ENCODE measurements at regions of chr14 and their contacts with region 1.

Region 1: DNA sequence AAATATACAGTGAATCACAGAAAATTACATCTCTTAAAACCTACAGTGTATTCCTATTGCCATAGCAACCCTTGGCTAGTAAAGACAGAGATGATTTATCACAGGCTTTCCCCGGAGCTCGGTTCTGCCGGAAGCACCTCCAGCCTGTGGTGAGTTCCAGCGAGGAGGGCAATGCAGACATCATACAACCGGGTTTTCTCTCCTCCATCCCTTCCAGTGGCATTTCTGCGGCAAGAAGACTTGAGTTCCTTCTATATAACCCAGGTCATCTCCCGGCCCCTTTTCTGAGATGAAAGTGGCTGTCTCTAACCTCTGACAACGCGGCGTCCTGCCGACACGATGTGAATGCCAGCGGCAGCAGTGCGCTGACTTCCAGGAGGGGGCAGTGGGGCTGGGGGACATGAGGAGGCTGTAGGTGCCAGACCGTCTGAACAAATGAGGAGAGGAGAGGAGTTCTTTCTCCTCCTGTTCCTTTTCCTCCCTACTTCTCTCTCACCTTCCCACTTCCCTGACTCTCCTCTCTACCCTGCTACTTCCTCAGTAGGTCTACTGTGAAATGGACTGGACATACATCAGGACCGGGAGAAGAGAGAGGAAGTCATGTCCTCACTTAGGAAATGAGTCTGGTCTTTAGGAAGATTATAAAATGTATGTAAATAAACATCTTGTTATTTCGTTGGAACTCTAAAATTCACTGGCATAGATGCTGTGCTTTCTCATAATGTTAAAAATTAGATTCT is 68.6 kb upstream of the MAX start:
- DNase-seq: peak; percentile 76
- H3K4me3 ChIP-seq: no peak overlapping the region
- H3K27ac ChIP-seq: no peak overlapping the region
- H3K4me1 ChIP-seq: peaks cover 6% of the 10 kb centered on the region
- H3K27me3 ChIP-seq: no peaks in the 10 kb centered on the region
- CTCF ChIP-seq: peak in 1 of 2 donors; percentile 16

Region 2: GRCh38 chr14:65229751-65230749 is 59.1 kb after region 1 on chr14:
- CTCF ChIA-PET with region 1: no interaction called
- dilution Hi-C with region 1: loop called (anchors 5 kb)
- in situ Hi-C with region 1: no loop called
- intact Hi-C with region 1: no loop called
- DNase-seq: peak; percentile 41
- H3K4me3 ChIP-seq: peak overlapping the region; percentile 22 to 37 (median 28)
- H3K27ac ChIP-seq: peak overlapping the region; percentile 45
- H3K4me1 ChIP-seq: peaks cover 31% of the 10 kb centered on the region
- H3K27me3 ChIP-seq: no peaks in the 10 kb centered on the region
- CTCF ChIP-seq: no peak

Region 3: GRCh38 chr14:65604936-65605335 is 434.0 kb after region 1 on chr14:
- CTCF ChIA-PET with region 1: no interaction called
- dilution Hi-C with region 1: no loop called
- in situ Hi-C with region 1: loop called in 1 of 2 experiments (anchors 25 kb)
- intact Hi-C with region 1: loop called (anchors 1 kb)
- DNase-seq: no peak
- H3K4me3 ChIP-seq: no peak overlapping the region
- H3K27ac ChIP-seq: no peak overlapping the region
- H3K4me1 ChIP-seq: no peaks in the 10 kb centered on the region
- H3K27me3 ChIP-seq: no peaks in the 10 kb centered on the region
- CTCF ChIP-seq: peak; percentile 11 to 35